AG04450 (cell line): ENCODE measurements at regions of chr4 and their contacts with region 1.

Region 1: GRCh38 chr4:92299152-92299551 is 4.6 kb upstream of the GRID2 start:
- DNase-seq: no peak
- H3K4me3 ChIP-seq: no peak overlapping the region
- H3K27ac ChIP-seq: no peak overlapping the region
- H3K27me3 ChIP-seq: peaks cover 21% of the 10 kb centered on the region
- CTCF ChIP-seq: peak; percentile 53

Region 2: DNA sequence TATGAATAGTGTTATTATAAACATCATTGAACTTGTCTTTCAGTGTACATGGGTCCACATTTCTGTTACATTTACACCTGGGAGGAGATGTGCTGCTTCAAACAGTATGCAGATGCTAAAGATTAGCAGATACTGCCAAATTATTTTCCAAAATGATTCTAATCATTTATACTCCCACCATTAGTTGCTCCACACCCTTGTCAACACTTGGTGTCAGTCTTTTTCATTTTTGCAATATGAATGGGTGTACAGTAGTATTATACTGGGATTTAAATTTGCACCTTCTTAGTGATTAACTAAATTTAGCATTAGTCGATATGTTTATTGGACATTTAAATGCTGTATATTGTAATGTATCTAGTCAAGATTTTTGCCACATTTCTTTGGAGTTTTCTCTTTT is 126.9 kb before region 1 on chr4:
- CTCF ChIA-PET with region 1: interaction called, 13 read pairs
- POLR2A ChIA-PET with region 1: no interaction called
- DNase-seq: no peak
- H3K4me3 ChIP-seq: no peak overlapping the region
- H3K27ac ChIP-seq: no peak overlapping the region
- H3K27me3 ChIP-seq: no peaks in the 10 kb centered on the region
- CTCF ChIP-seq: peak; percentile 47